T-cell (primary cell): ENCODE measurements at regions of chr16 and their contacts with region 1.

Region 1: GRCh38 chr16:68548947-68549346 is 9.9 kb downstream of the ZFP90 start:
- DNase-seq: peak in 32 of 35 experiments; percentile 29 to 72 (median 48)
- ATAC-seq: peak; percentile 88 to 100 (median 99)
- H3K4me3 ChIP-seq: peak overlapping the region in 1 of 2 donors; percentile 33
- H3K4me3 Mint-ChIP-seq: peak overlapping the region in 1 of 3 donors; percentile 71
- H3K27ac ChIP-seq: no peak overlapping the region
- H3K27ac Mint-ChIP-seq: peak overlapping the region; percentile 74
- H3K4me1 ChIP-seq: peaks cover 0 to 11% of the 10 kb centered on the region in 2 experiments
- H3K4me1 Mint-ChIP-seq: peaks cover 22 to 31% (median 26%) of the 10 kb centered on the region in 3 donors
- H3K27me3 ChIP-seq: no peaks in the 10 kb centered on the region
- H3K27me3 Mint-ChIP-seq: no peaks in the 10 kb centered on the region

Region 2: DNA sequence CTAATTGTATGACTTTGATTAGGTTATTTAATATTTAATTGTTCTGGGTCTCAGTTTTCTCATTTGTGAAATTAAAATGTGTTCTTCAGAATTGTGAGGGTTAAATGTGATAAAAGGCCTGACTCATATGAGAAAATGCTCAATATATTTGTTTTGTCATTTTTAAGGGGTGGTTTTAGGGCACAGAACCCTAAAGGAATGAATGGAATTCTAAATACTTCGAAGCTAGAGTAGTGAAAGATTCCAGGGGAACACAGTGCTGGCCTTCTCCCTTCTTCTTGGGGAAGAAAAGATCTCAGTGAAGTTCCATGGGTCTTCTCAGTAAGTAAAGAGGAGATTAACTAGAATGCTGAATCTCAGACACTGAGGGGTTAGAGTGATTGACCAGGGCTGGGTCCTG is 96.8 kb before region 1 on chr16:
- CTCF ChIA-PET with region 1: no interaction called
- POLR2A ChIA-PET with region 1: interaction called in 1 of 2 experiments, 15 read pairs
- DNase-seq: no peak
- ATAC-seq: no peak
- H3K4me3 ChIP-seq: no peak overlapping the region
- H3K4me3 Mint-ChIP-seq: no peak overlapping the region
- H3K27ac ChIP-seq: no peak overlapping the region
- H3K27ac Mint-ChIP-seq: no peak overlapping the region
- H3K4me1 ChIP-seq: peaks cover 8 to 29% of the 10 kb centered on the region in 2 experiments
- H3K4me1 Mint-ChIP-seq: peaks cover 13 to 29% (median 21%) of the 10 kb centered on the region in 3 donors
- H3K27me3 ChIP-seq: peaks cover 0 to 9% of the 10 kb centered on the region in 2 experiments
- H3K27me3 Mint-ChIP-seq: no peaks in the 10 kb centered on the region

Region 3: DNA sequence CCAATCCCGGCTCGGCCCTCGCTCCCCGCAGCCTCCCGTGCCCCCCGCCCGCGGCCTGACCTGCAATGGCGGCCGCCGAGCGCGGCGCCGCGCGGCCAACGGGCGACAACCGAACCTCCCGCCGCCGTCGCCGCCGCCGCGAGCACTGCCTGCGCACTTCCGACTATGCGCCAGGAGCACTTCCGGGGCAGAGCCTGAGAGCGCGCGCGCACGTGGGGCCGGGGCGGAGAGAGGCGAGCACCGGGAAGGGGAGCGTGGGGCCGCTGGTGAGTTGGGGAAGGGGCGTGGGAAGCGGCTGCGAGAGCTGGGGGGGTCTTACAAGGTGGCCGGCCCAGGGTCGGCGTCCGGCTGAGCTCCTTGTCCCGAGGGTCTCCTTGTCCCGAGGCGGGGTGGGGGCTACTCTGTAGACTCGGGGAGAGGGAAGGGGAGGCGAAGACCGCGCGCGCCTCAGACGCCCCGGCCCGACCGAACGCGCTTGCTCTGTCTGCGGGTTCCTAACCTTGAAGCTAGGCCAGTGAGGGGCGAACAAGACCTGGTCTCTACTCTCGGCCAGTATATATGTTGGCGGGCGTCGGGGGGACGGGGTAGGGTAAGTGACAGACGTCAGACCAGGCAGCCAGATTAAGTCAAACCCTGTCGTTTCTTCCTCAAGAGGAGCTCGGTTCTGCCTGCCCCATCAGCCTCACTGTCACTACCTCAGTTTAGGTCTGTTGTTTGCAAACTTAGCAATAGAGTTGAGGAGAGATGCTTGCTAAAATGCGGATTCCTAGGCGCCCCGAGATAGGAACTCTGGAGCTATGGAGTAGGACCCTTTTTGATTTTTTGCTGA is 583.7 kb after region 1 on chr16 and contains the starts of genes CHTF8 and UTP4:
- CTCF ChIA-PET with region 1: interaction called in 1 of 2 experiments, 14 read pairs
- POLR2A ChIA-PET with region 1: no interaction called
- DNase-seq: peak; percentile 68 to 92 (median 84)
- ATAC-seq: peak; percentile 91 to 94 (median 93)
- H3K4me3 ChIP-seq: peak within 1 kb of the TSS; percentile 80 to 92
- H3K4me3 Mint-ChIP-seq: peak within 1 kb of the TSS; percentile 92 to 95 (median 94)
- H3K27ac ChIP-seq: peak within 1 kb of the TSS; percentile 59
- H3K27ac Mint-ChIP-seq: peak within 1 kb of the TSS; percentile 88 to 93
- H3K4me1 ChIP-seq: peaks cover 16 to 20% of the 10 kb centered on the region in 2 experiments
- H3K4me1 Mint-ChIP-seq: peaks cover 57 to 62% (median 61%) of the 10 kb centered on the region in 3 donors
- H3K27me3 ChIP-seq: no peaks in the 10 kb centered on the region
- H3K27me3 Mint-ChIP-seq: no peaks in the 10 kb centered on the region
- total RNA-seq, gene CHTF8: 64.8 to 138 (median 124) TPM
- total RNA-seq, gene UTP4: 30.3 to 42.5 (median 37.8) TPM